ENCODE measurements at regions of chr2 and their contacts with region 1.

Region 1: GRCh38 chr2:238573065-238573778 is 146.5 kb downstream of the ASB1 start:
- DNase-seq: no peak
- ATAC-seq: no peak
- H3K4me3 ChIP-seq: no peak overlapping the region
- H3K27ac ChIP-seq: no peak overlapping the region
- H3K4me1 ChIP-seq: peaks cover 0 to 3% (median 0%) of the 10 kb centered on the region in 9 donors
- H3K27me3 ChIP-seq: peaks cover 0 to 6% (median 1%) of the 10 kb centered on the region in 7 donors
- CTCF ChIP-seq: peak in 8 of 9 donors; percentile 30 to 55 (median 46)

Region 2: GRCh38 chr2:238528953-238529781 is 44.1 kb before region 1 on chr2:
- intact Hi-C with region 1: no loop called
- DNase-seq: no peak
- ATAC-seq: no peak
- H3K4me3 ChIP-seq: no peak overlapping the region
- H3K27ac ChIP-seq: no peak overlapping the region
- H3K4me1 ChIP-seq: no peaks in the 10 kb centered on the region
- H3K27me3 ChIP-seq: peaks cover 0 to 17% (median 0%) of the 10 kb centered on the region in 7 donors
- CTCF ChIP-seq: no peak

Region 3: GRCh38 chr2:238695538-238695937 is 122.3 kb after region 1 on chr2:
- intact Hi-C with region 1: loop called in 1 of 10 experiments (anchors 10 kb)
- DNase-seq: no peak
- ATAC-seq: peak in 2 of 8 donors; percentile 26 to 29
- H3K4me3 ChIP-seq: no peak overlapping the region
- H3K27ac ChIP-seq: no peak overlapping the region
- H3K4me1 ChIP-seq: peaks cover 0 to 33% (median 10%) of the 10 kb centered on the region in 9 donors
- H3K27me3 ChIP-seq: peaks cover 0 to 3% (median 0%) of the 10 kb centered on the region in 7 donors
- CTCF ChIP-seq: no peak